CD8-positive, alpha-beta T cell (primary cell): ENCODE measurements at regions of chr2 and their contacts with region 1.

Region 1: GRCh38 chr2:147989809-147990403 is 30.6 kb downstream of the ORC4 start:
- DNase-seq: peak in 4 of 9 experiments; percentile 29 to 70 (median 45)
- ATAC-seq: peak; percentile 92
- H3K4me3 ChIP-seq: no peak overlapping the region
- H3K4me3 Mint-ChIP-seq: no peak overlapping the region
- H3K27ac ChIP-seq: no peak overlapping the region
- H3K27ac Mint-ChIP-seq: peak overlapping the region; percentile 11
- H3K4me1 ChIP-seq: no peaks in the 10 kb centered on the region
- H3K4me1 Mint-ChIP-seq: peaks cover 26% of the 10 kb centered on the region
- H3K27me3 ChIP-seq: no peaks in the 10 kb centered on the region
- H3K27me3 Mint-ChIP-seq: no peaks in the 10 kb centered on the region
- CTCF ChIP-seq: peak; percentile 99

Region 2: GRCh38 chr2:148201075-148202004 is 211.4 kb after region 1 on chr2:
- CTCF ChIA-PET with region 1: interaction called, 12 read pairs
- POLR2A ChIA-PET with region 1: no interaction called
- intact Hi-C with region 1: loop called (anchors 1 kb)
- DNase-seq: peak in 7 of 9 experiments; percentile 2 to 58 (median 26)
- ATAC-seq: no peak
- H3K4me3 ChIP-seq: no peak overlapping the region
- H3K4me3 Mint-ChIP-seq: no peak overlapping the region
- H3K27ac ChIP-seq: no peak overlapping the region
- H3K27ac Mint-ChIP-seq: no peak overlapping the region
- H3K4me1 ChIP-seq: no peaks in the 10 kb centered on the region
- H3K4me1 Mint-ChIP-seq: peaks cover 4% of the 10 kb centered on the region
- H3K27me3 ChIP-seq: no peaks in the 10 kb centered on the region
- H3K27me3 Mint-ChIP-seq: no peaks in the 10 kb centered on the region
- CTCF ChIP-seq: peak; percentile 23

Region 3: GRCh38 chr2:148756396-148756931 is 766.6 kb after region 1 on chr2:
- CTCF ChIA-PET with region 1: no interaction called
- POLR2A ChIA-PET with region 1: no interaction called
- intact Hi-C with region 1: loop called in 1 of 2 experiments (anchors 10 kb)
- DNase-seq: no peak
- ATAC-seq: no peak
- H3K4me3 ChIP-seq: no peak overlapping the region
- H3K4me3 Mint-ChIP-seq: no peak overlapping the region
- H3K27ac ChIP-seq: no peak overlapping the region
- H3K27ac Mint-ChIP-seq: no peak overlapping the region
- H3K4me1 ChIP-seq: no peaks in the 10 kb centered on the region
- H3K4me1 Mint-ChIP-seq: peaks cover 32% of the 10 kb centered on the region
- H3K27me3 ChIP-seq: no peaks in the 10 kb centered on the region
- H3K27me3 Mint-ChIP-seq: no peaks in the 10 kb centered on the region
- CTCF ChIP-seq: no peak